ENCODE measurements at regions of chr20 and their contacts with region 1.

Region 1: GRCh38 chr20:16761305-16761829 is 13.2 kb downstream of the OTOR start:
- DNase-seq: peak; percentile 19
- H3K4me3 ChIP-seq: no peak overlapping the region
- CTCF ChIP-seq: peak; percentile 59

Region 2: GRCh38 chr20:16516794-16517193 is 244.6 kb before region 1 on chr20:
- CTCF ChIA-PET with region 1: interaction called, 25 read pairs
- POLR2A ChIA-PET with region 1: no interaction called
- DNase-seq: no peak
- H3K4me3 ChIP-seq: no peak overlapping the region
- CTCF ChIP-seq: no peak